ENCODE measurements at regions of chr6 and their contacts with region 1.

Region 1: GRCh38 chr6:53752856-53753255 is 41.9 kb upstream of the LRRC1 start:
- DNase-seq: no peak
- ATAC-seq: no peak

Region 2: DNA sequence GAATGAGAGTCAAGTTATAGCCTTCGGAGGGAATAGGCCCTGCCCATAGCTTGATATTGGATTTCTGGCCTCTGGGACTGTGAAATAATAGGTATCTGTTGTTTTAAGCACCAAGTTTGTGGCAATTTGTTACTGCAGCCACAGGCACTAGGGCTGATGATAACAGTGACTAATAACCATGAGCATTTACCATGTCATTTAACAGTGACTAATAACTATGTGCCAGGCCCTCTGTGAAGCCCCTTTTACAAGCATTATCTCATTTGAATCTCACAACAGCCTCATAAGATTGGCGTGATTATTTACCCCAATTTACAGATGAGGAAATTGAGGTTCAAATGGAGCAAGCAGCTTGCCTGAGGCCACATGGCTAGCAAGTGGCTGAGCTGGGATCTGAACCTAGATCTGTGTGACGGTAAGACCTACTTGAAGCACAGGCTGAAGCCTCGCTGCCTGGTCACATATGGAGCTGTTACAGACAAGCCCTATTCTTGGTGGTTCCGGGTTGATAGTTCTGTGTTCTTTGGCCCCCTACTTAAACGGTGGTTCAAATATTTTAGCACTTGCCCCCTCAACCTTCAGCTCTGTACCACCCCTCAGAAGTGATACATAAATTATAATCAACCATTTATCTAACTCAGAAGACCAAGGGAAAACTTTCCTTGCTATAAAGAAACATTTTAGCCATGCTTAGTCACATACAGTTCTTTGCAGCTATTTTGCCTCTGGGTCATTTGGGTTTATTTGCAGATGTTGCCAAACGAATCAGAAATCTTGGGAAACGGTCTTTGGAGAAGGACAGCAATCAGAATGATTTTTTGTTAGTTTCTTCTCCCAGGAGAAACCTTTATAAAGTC is 502.5 kb before region 1 on chr6:
- intact Hi-C with region 1: no loop called
- DNase-seq: no peak
- ATAC-seq: peak; percentile 71

Region 3: GRCh38 chr6:54970337-54970736 is 1217.5 kb after region 1 on chr6:
- intact Hi-C with region 1: loop called (anchors 5 kb)
- DNase-seq: no peak
- ATAC-seq: no peak

Measured in sciatic nerve (tissue), 2 donors.